ENCODE measurements at regions of chrX and their contacts with region 1.

Region 1: DNA sequence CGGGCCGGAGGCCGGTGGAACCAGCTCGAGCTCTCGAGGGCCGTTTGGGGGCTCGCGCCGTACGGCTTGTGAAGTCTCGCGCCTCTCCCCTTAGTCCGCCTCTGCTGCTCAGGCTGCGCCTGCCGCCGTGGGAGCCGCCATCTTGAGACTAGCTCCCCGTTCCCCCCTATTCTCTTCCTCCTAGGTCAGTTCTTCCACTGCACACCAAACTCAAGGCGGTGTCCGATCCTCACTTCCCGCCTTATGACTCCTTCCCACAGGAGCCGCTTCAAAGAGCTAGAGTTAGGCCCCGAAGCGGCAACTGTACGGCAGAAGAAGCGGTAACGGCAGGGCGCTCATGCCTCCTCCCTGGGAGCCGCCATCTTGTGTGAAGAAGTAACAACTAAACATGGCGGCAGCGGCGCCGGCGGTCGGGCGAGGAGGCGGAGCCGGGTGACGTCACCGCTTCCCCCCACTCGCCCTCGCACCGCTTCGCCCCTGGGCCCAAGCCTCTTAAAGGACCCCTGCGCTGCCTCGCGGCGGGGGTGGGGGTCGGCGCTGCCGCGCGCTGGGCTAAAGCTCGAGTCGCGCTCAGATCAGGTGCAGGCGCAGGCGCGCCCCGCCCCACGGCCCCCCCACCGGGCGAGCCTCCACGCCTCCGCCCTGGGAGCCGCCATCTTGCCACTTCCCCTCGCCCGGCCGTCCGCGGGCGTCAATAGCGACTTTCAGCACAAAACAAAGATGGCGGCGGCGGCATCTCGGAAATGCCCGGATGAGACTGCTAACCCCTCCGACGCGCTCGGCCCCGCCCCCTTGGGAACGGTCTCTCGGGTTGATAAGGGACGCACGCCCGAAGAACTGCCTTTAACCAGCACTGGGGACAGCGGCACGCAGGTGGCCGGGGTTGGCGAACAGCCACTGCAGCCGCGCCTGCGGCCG is at the start of gene HCFC1:
- DNase-seq: peak; percentile 95
- ATAC-seq: peak; percentile 46
- H3K4me3 ChIP-seq: peak within 1 kb of the TSS; percentile 63 to 99 (median 97)
- H3K4me3 Mint-ChIP-seq: peak within 1 kb of the TSS; percentile 100
- H3K27ac ChIP-seq: peak within 1 kb of the TSS; percentile 100
- H3K27ac Mint-ChIP-seq: peak within 1 kb of the TSS; percentile 100
- H3K4me1 ChIP-seq: peaks cover 46 to 50% of the 10 kb centered on the region in 2 donors
- H3K4me1 Mint-ChIP-seq: peaks cover 47% of the 10 kb centered on the region
- H3K27me3 ChIP-seq: no peaks in the 10 kb centered on the region
- H3K27me3 Mint-ChIP-seq: no peaks in the 10 kb centered on the region
- CTCF ChIP-seq: no peak
- total RNA-seq, gene HCFC1: 57.7 and 59.4 TPM in 2 replicates

Region 2: GRCh38 chrX:153539171-153539978 is 432.3 kb before region 1 on chrX:
- CTCF ChIA-PET with region 1: no interaction called
- POLR2A ChIA-PET with region 1: no interaction called
- intact Hi-C with region 1: no loop called
- DNase-seq: peak; percentile 68
- ATAC-seq: peak; percentile 93
- H3K4me3 ChIP-seq: no peak overlapping the region
- H3K4me3 Mint-ChIP-seq: no peak overlapping the region
- H3K27ac ChIP-seq: no peak overlapping the region
- H3K27ac Mint-ChIP-seq: no peak overlapping the region
- H3K4me1 ChIP-seq: peaks cover 0 to 3% of the 10 kb centered on the region in 2 donors
- H3K4me1 Mint-ChIP-seq: no peaks in the 10 kb centered on the region
- H3K27me3 ChIP-seq: no peaks in the 10 kb centered on the region
- H3K27me3 Mint-ChIP-seq: peaks cover 3% of the 10 kb centered on the region
- CTCF ChIP-seq: peak; percentile 76

Region 3: GRCh38 chrX:153927922-153928760 is 43.6 kb before region 1 on chrX:
- CTCF ChIA-PET with region 1: interaction called, 27 read pairs
- POLR2A ChIA-PET with region 1: interaction called, 35 read pairs
- intact Hi-C with region 1: loop called (anchors 1 kb)
- DNase-seq: peak; percentile 95
- ATAC-seq: peak; percentile 62
- H3K4me3 ChIP-seq: peak overlapping the region; percentile 73 to 88 (median 78)
- H3K4me3 Mint-ChIP-seq: peak overlapping the region; percentile 92
- H3K27ac ChIP-seq: peak overlapping the region; percentile 96 to 98
- H3K27ac Mint-ChIP-seq: peak overlapping the region; percentile 98
- H3K4me1 ChIP-seq: peaks cover 41 to 45% of the 10 kb centered on the region in 2 donors
- H3K4me1 Mint-ChIP-seq: peaks cover 35% of the 10 kb centered on the region
- H3K27me3 ChIP-seq: no peaks in the 10 kb centered on the region
- H3K27me3 Mint-ChIP-seq: no peaks in the 10 kb centered on the region
- CTCF ChIP-seq: no peak

Region 4: GRCh38 chrX:153981771-153982533 is 10.2 kb after region 1 on chrX:
- CTCF ChIA-PET with region 1: interaction called, 6 read pairs
- POLR2A ChIA-PET with region 1: interaction called, 5 read pairs
- intact Hi-C with region 1: loop called (anchors 2 kb)
- DNase-seq: peak; percentile 39
- ATAC-seq: no peak
- H3K4me3 ChIP-seq: peak overlapping the region in 2 of 5 experiments; percentile 9 to 24
- H3K4me3 Mint-ChIP-seq: peak overlapping the region; percentile 83
- H3K27ac ChIP-seq: peak overlapping the region; percentile 69 to 78
- H3K27ac Mint-ChIP-seq: peak overlapping the region; percentile 97
- H3K4me1 ChIP-seq: peaks cover 46 to 67% of the 10 kb centered on the region in 2 donors
- H3K4me1 Mint-ChIP-seq: peaks cover 50% of the 10 kb centered on the region
- H3K27me3 ChIP-seq: no peaks in the 10 kb centered on the region
- H3K27me3 Mint-ChIP-seq: no peaks in the 10 kb centered on the region
- CTCF ChIP-seq: no peak

Region 5: DNA sequence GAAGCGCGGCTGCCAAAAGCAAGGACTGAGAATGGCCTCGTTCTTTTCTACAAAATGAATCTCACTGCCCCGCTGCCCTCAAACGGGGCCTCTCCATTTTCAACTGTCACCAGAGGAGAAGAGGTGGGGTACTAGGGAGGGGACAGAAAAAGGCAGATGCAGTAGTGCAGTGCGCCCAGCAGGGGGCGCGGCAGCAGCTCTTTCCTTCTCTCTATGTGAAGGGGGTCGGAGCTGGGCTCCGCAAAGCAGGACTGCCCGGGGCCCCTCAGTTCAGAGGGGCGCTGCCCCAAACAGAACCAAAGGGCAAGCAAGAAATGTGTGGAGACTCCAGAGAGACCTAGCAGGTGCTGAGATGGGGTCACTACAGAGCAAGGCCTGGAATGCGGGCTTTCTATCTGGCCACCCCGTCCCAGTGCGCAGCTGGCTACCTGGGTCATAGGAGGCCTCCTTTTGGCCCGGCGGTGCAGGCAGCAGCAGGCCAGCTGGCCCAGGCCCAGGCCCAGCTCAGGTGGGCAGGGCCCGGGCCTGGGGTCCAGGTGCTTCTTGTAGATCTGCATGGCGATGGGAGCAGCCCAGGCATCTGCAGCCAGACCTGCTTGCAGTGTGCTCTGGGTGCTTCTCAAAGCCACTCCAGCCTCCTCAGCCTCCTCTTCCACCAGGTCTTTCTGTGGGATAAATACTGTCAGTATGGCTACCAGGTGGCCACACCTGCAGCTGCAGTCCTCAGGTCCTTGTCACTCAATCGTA is 42.1 kb after region 1 on chrX:
- CTCF ChIA-PET with region 1: interaction called, 21 read pairs
- POLR2A ChIA-PET with region 1: interaction called, 3 read pairs
- intact Hi-C with region 1: loop called (anchors 2 kb)
- DNase-seq: peak; percentile 68
- ATAC-seq: peak; percentile 76
- H3K4me3 ChIP-seq: no peak overlapping the region
- H3K4me3 Mint-ChIP-seq: no peak overlapping the region
- H3K27ac ChIP-seq: no peak overlapping the region
- H3K27ac Mint-ChIP-seq: peak overlapping the region; percentile 32
- H3K4me1 ChIP-seq: peaks cover 2 to 26% of the 10 kb centered on the region in 2 donors
- H3K4me1 Mint-ChIP-seq: peaks cover 16% of the 10 kb centered on the region
- H3K27me3 ChIP-seq: no peaks in the 10 kb centered on the region
- H3K27me3 Mint-ChIP-seq: no peaks in the 10 kb centered on the region
- CTCF ChIP-seq: peak; percentile 81

Region 6: DNA sequence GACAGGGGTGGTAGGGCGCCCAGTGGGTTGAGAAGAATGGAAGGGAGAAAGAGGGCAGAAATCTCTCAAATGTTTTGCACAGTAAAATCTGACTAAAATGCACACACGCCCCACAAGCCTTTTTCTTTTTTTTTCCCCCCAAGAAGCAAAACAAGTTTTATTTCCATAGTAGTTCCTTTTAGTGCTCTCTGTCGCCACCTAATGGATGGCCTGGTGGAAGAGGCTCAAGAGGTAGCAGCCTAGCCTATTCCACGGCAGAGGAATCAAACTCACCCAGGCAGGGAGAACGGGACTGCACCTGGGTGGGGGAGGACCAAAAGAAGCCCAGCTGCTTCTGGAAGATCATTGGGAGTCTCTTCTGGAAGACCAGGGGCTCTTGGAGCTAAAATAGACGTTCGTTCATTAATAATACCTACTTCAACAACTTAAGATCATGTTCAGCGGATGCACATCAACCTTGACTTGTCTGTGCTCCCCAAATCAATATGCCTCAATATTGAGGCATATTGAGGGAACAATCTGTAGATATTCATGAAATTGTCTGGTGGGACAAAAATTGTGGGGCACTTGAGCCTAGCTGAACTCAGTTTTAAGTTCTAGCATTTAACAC is 79.6 kb after region 1 on chrX:
- CTCF ChIA-PET with region 1: interaction called, 5 read pairs
- POLR2A ChIA-PET with region 1: no interaction called
- intact Hi-C with region 1: loop called (anchors 5 kb)
- DNase-seq: peak; percentile 70
- ATAC-seq: peak; percentile 39
- H3K4me3 ChIP-seq: no peak overlapping the region
- H3K4me3 Mint-ChIP-seq: no peak overlapping the region
- H3K27ac ChIP-seq: peak overlapping the region in 1 of 2 donors; percentile 14
- H3K27ac Mint-ChIP-seq: peak overlapping the region; percentile 41
- H3K4me1 ChIP-seq: peaks cover 4 to 10% of the 10 kb centered on the region in 2 donors
- H3K4me1 Mint-ChIP-seq: peaks cover 16% of the 10 kb centered on the region
- H3K27me3 ChIP-seq: no peaks in the 10 kb centered on the region
- H3K27me3 Mint-ChIP-seq: no peaks in the 10 kb centered on the region
- CTCF ChIP-seq: peak; percentile 74

Measured in B cell (primary cell).